ENCODE measurements at regions of chr2 and their contacts with region 1.

Region 1: DNA sequence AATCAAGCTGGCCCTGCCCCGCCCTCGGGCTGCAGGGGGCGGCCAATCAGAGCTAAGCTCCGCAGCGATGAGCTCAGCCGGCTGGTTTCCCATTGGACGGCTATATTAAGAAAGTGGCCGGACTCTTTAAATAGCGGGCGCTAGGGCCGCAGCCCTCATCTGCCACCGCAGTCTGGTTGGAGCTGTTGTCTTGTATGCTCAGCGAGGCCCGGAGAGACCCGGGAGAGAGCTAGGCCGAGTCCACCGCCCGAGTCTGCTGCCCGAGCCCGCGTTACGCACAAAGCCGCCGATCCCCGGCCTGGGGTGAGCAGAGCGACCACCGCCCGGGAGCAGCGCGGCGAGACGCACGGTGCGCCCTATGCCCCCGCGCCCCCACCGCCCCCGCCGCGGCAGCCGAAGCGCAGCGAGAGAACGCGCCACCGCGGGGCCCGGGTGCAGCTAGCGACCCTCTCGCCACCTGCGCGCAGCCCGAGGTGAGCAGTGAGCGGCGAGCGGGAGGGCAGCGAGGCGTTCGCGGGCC is at the start of gene RHOB:
- DNase-seq: peak; percentile 94
- ATAC-seq: peak; percentile 88
- H3K4me3 ChIP-seq: peak within 1 kb of the TSS; percentile 72 to 80
- H3K27ac ChIP-seq: peak within 1 kb of the TSS; percentile 88
- H3K4me1 ChIP-seq: peaks cover 41 to 53% of the 10 kb centered on the region in 2 experiments
- H3K27me3 ChIP-seq: no peaks in the 10 kb centered on the region
- CTCF ChIP-seq: no peak
- POLR2A ChIP-seq: peak; percentile 99
- RAD21 ChIP-seq: no peak; the same call in 1 of the 2 replicates
- total RNA-seq, gene RHOB: 72.9 TPM

Region 2: DNA sequence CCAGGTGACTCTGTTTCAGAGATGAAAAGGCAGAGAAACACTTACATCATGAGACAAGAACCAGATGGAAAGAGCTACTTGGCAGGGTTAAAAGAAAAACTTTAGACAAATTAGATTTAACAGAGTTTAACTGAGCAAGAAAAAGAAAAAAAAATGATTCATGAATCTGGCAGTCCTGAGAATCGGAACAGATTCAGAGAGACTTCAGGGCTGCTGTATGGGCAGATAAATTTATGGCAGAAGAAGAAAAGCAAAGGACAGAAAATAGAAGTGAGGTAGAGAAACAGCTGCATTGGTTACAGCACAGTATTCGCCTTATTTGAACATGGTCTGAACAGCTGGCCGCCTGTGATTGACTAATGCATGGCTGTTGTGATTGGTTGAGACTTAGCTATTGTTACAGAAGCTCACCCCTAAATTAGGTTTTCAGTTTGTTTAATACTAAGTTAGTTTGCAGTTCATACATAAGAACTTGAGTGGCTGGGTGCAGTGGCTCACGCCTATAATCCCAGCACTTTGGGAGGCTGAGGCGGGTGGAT is 43.1 kb before region 1 on chr2:
- CTCF ChIA-PET with region 1: no interaction called
- POLR2A ChIA-PET with region 1: interaction called, 12 read pairs
- RAD21 ChIA-PET with region 1: no interaction called
- intact Hi-C with region 1: no loop called
- DNase-seq: no peak
- ATAC-seq: no peak
- H3K4me3 ChIP-seq: no peak overlapping the region
- H3K27ac ChIP-seq: no peak overlapping the region
- H3K4me1 ChIP-seq: peaks cover 0 to 7% of the 10 kb centered on the region in 2 experiments; a peak in 1 of 4 replicates
- H3K27me3 ChIP-seq: no peaks in the 10 kb centered on the region
- CTCF ChIP-seq: no peak
- POLR2A ChIP-seq: no peak
- RAD21 ChIP-seq: no peak

Region 3: DNA sequence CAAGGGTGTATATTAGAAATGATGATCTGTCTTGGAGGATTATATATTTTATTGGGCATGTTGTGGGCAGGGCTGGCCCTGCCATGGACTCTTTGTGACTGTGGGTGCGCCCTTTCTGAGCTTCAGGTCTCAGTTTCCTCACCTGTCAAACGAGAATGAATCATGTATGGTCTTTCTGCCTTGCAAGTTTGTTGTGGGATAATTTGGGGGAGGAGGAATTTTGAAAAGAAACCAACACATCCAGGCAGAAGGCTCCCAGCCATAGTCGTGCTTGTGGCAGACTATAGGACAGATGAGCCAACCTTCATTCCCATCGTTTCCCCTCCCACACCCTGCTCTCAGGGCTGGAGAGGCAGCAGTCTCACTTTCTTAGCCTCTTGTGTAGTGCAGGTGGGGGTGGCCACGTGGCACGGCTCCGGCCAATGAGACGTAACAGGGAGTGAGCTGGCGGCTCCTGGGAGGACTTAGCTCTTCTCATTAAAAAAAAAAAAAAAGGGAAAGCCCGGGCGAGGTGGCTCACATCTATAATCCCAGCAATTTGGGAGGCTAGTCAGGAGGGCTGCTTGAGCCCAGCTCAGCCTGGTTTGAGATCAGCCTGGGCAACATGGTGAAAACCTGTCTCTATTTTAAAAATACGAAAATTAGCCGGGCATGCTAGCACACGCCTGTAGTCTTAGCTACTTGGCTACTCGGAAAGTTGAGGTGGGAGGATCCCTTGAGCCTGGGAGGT is 63.0 kb after region 1 on chr2:
- CTCF ChIA-PET with region 1: no interaction called
- POLR2A ChIA-PET with region 1: interaction called, 25 read pairs
- RAD21 ChIA-PET with region 1: interaction called in 1 of 2 experiments, 3 read pairs
- intact Hi-C with region 1: no loop called
- DNase-seq: peak; percentile 62
- ATAC-seq: peak; percentile 94
- H3K4me3 ChIP-seq: peak overlapping the region; percentile 22 to 37
- H3K27ac ChIP-seq: peak overlapping the region; percentile 35
- H3K4me1 ChIP-seq: peaks cover 14 to 43% of the 10 kb centered on the region in 2 experiments
- H3K27me3 ChIP-seq: no peaks in the 10 kb centered on the region
- CTCF ChIP-seq: no peak
- POLR2A ChIP-seq: no peak
- RAD21 ChIP-seq: no peak

Region 4: DNA sequence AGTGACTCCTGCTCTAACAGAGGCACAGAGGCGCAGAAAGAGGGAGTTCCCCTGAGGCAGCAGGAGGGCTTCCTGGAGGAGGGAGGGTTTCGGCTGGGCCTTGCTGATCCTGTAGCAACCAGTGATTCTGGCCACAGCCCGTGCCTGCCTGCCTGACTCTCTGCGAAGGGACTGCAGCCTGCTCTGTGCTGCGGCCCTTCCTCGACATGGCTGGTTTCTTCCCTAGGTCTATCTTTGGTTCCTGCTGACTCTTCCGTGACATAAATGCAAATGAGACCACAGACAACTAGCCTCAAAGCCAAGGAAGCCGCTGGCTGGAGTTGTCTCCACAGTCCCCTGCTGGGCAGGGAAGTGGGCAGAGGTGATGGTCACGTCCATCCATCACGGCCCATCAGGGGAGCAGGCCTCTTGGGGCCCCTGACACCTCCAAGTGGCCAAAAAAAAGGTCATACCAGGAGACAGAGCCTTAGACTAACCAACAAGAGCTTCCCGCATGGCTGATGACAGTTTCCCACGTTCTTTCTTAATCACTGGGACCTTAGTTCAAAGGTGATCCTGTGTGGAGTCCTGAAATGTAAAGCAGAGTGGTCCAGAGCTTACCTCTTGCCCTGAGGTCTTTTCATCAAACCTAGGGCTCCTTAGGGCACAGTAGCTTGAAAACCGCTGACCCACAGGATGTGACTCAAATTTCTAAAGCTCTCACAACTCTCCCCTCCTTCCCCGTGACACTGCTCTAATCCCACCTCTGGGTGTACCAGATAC is 148.6 kb after region 1 on chr2:
- CTCF ChIA-PET with region 1: interaction called, 5 read pairs
- POLR2A ChIA-PET with region 1: interaction called, 53 read pairs
- RAD21 ChIA-PET with region 1: no interaction called
- intact Hi-C with region 1: no loop called
- DNase-seq: no peak
- ATAC-seq: peak; percentile 15; the same call in 1 of the 2 replicates
- H3K4me3 ChIP-seq: no peak overlapping the region
- H3K27ac ChIP-seq: no peak overlapping the region; the same call in 1 of the 2 replicates
- H3K4me1 ChIP-seq: peaks cover 27 to 52% of the 10 kb centered on the region in 2 experiments
- H3K27me3 ChIP-seq: no peaks in the 10 kb centered on the region
- CTCF ChIP-seq: 0 out of 6 replicates have a peak, but pooled peaks of 1 of the 3 experiments have one; percentile 4
- POLR2A ChIP-seq: no peak
- RAD21 ChIP-seq: no peak

Region 5: DNA sequence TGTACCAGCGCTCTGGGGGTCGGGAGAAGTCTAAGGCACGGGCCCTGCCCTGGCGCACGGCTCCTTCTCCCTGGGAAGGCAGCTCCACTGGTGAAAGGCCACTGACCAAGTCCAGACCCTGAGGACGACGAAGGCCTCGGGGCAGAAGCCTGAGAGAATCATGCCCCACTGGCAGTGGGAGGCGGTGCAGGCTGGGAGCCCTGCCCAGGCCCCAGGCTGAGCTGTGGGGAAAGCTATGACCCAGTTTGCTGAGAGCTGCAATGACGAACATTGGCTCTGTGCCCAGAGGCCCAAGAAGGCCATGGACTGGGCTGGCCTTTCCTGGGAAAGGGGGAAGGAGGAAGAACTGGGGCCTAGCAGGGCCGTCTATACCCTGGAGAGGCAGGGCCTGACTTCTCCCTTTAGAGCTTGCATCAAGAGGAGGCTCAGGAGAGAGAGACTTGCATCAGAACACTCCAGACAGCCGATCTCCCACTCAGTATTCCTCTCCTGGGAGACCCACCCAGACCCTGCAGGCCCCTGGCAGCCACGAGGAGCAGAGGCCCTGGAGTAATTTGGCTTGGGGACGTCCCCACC is 171.0 kb after region 1 on chr2:
- CTCF ChIA-PET with region 1: interaction called, 6 read pairs
- POLR2A ChIA-PET with region 1: interaction called, 34 read pairs
- RAD21 ChIA-PET with region 1: interaction called in 1 of 2 experiments, 3 read pairs
- intact Hi-C with region 1: no loop called
- DNase-seq: peak; percentile 67
- ATAC-seq: peak; percentile 88
- H3K4me3 ChIP-seq: no peak overlapping the region
- H3K27ac ChIP-seq: peak overlapping the region; percentile 37; the same call in 1 of the 2 replicates
- H3K4me1 ChIP-seq: peaks cover 27 to 43% of the 10 kb centered on the region in 2 experiments; a peak in 3 of 4 replicates
- H3K27me3 ChIP-seq: no peaks in the 10 kb centered on the region
- CTCF ChIP-seq: peak in 2 of 3 experiments; percentile 46 to 47; a peak in 4 of 6 replicates
- POLR2A ChIP-seq: no peak
- RAD21 ChIP-seq: no peak

Region 6: GRCh38 chr2:20650880-20651730 is 204.1 kb after region 1 on chr2 and contains the start of gene HS1BP3:
- CTCF ChIA-PET with region 1: interaction called, 6 read pairs
- POLR2A ChIA-PET with region 1: interaction called, 11 read pairs
- RAD21 ChIA-PET with region 1: no interaction called
- intact Hi-C with region 1: no loop called
- DNase-seq: peak; percentile 28
- ATAC-seq: peak; percentile 97
- H3K4me3 ChIP-seq: peak within 1 kb of the TSS; percentile 82 to 95
- H3K27ac ChIP-seq: peak within 1 kb of the TSS; percentile 69
- H3K4me1 ChIP-seq: peaks cover 5 to 18% of the 10 kb centered on the region in 2 experiments
- H3K27me3 ChIP-seq: no peaks in the 10 kb centered on the region
- CTCF ChIP-seq: peak; percentile 28 to 69 (median 59); a peak in 4 of 6 replicates
- POLR2A ChIP-seq: peak; percentile 84
- RAD21 ChIP-seq: peak; percentile 60
- total RNA-seq, gene HS1BP3: 17.1 TPM